PC-9 (cell line): ENCODE measurements at regions of chr2 and their contacts with region 1.

Region 1: GRCh38 chr2:6683516-6683915 is 182.2 kb downstream of the CMPK2 start:
- DNase-seq: no peak
- H3K4me3 ChIP-seq: no peak overlapping the region
- H3K27ac ChIP-seq: no peak overlapping the region
- H3K4me1 ChIP-seq: no peaks in the 10 kb centered on the region
- H3K27me3 ChIP-seq: no peaks in the 10 kb centered on the region
- CTCF ChIP-seq: no peak

Region 2: DNA sequence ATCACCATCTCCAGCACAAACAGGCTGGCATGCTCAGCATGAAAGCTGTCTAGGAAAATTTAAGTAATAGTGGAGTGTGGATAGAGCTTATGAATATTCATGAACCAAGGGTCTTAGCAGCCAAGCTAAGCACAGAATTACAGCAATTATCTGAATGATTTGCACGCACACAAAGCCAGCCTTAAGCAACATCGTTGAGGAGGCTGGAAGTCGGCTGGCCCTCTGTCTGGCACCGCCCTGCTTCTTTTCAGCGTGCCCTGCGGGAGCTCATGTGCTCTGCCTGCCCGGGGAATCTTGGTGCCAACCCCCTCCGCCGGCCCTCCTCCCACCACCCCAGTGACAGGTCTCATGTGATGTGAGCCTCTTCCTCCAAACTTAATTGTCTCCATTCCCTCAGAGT is 357.9 kb before region 1 on chr2:
- CTCF ChIA-PET with region 1: no interaction called
- POLR2A ChIA-PET with region 1: no interaction called
- intact Hi-C with region 1: no loop called
- DNase-seq: no peak
- H3K4me3 ChIP-seq: no peak overlapping the region
- H3K27ac ChIP-seq: no peak overlapping the region
- H3K4me1 ChIP-seq: no peaks in the 10 kb centered on the region
- H3K27me3 ChIP-seq: no peaks in the 10 kb centered on the region; the same call in 1 of the 2 replicates
- CTCF ChIP-seq: no peak

Region 3: GRCh38 chr2:6639929-6640625 is 43.4 kb before region 1 on chr2:
- CTCF ChIA-PET with region 1: no interaction called
- POLR2A ChIA-PET with region 1: no interaction called
- intact Hi-C with region 1: loop called (anchors 2 kb)
- DNase-seq: no peak
- H3K4me3 ChIP-seq: no peak overlapping the region
- H3K27ac ChIP-seq: no peak overlapping the region
- H3K4me1 ChIP-seq: no peaks in the 10 kb centered on the region
- H3K27me3 ChIP-seq: no peaks in the 10 kb centered on the region
- CTCF ChIP-seq: no peak